Activated T-helper 1 cell treated with anti-CD3 and anti-CD28 coated beads, Interleukin-12 subunit alpha, Interleukin-12 subunit beta, Interleukin-2, Interleukin-4 antibody, amounts not matched to agents 30 ng/mL and 10 ng/mL and 1 ng/mL, durations not matched to agents 14 hours and 24 hours and 36 hours (primary cell): ENCODE measurements at regions of chr1 and their contacts with region 1.

Region 1: GRCh38 chr1:171485375-171486047 is at the start of gene PRRC2C:
- DNase-seq: peak; percentile 91
- H3K4me3 Mint-ChIP-seq: peak within 1 kb of the TSS; percentile 98
- H3K27ac Mint-ChIP-seq: peak within 1 kb of the TSS; percentile 97
- H3K4me1 Mint-ChIP-seq: peaks cover 51% of the 10 kb centered on the region
- H3K27me3 Mint-ChIP-seq: peaks cover 1% of the 10 kb centered on the region
- total RNA-seq, gene PRRC2C: 291 and 295 TPM in 2 replicates

Region 2: DNA sequence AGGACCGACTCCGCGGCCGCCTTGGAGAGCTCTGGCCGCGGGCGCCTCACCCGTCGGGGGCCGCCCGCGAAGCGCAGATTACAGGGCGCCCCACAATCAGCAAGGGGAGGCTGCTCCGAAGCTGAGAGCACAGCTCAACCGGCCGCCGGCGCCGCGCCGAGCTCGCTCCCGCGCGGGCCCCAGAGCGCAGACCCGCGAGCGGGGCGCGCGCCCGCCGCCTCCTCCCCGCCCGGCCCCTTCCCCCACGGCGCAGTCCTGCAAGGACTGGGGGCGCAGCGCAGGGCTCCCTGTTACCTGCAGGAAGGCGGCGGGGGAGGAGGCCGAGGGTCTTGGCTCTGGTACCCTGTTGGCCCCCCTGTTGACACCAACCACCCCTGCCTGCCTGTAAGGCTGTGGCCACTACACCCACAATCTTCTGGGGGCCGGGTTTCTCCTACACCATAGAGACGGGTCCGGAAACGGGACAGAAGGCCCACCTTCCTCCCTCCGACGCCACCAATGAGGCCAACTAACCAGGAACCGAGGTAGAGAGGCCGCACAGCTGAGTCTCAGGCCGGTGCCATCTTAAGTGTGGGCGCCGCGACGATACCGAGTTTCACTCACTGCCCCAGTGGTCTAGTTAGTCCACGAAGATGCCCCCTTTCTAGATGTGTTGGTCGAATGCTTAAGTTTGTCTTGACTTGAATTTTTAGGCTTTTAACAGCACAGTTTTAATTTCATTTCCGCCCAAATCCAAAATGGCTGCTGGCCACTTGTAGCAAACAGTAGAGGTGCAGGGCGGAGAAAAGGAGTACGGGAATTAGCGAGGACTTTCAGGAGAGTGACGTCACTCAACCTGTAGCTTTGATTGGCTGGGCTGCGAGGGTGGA is 1591.8 kb before region 1 on chr1 and contains the start of gene SCYL3:
- intact Hi-C with region 1: loop called (anchors 5 kb)
- DNase-seq: peak; percentile 86
- H3K4me3 Mint-ChIP-seq: peak within 1 kb of the TSS; percentile 86
- H3K27ac Mint-ChIP-seq: peak within 1 kb of the TSS; percentile 100
- H3K4me1 Mint-ChIP-seq: peaks cover 51% of the 10 kb centered on the region
- H3K27me3 Mint-ChIP-seq: peaks cover 12% of the 10 kb centered on the region
- total RNA-seq, gene SCYL3: 11.8 and 12.3 TPM in 2 replicates

Region 3: GRCh38 chr1:170531758-170532657 is 953.5 kb before region 1 on chr1 and contains the start of gene GORAB:
- intact Hi-C with region 1: loop called (anchors 2 kb)
- DNase-seq: peak; percentile 82
- H3K4me3 Mint-ChIP-seq: no peak within 1 kb of the TSS
- H3K27ac Mint-ChIP-seq: no peak within 1 kb of the TSS
- H3K4me1 Mint-ChIP-seq: peaks cover 8% of the 10 kb centered on the region
- H3K27me3 Mint-ChIP-seq: peaks cover 4% of the 10 kb centered on the region
- total RNA-seq, gene GORAB: 11.8 and 12.2 TPM in 2 replicates

Region 4: GRCh38 chr1:171501305-171502024 is 16.0 kb after region 1 on chr1:
- intact Hi-C with region 1: loop called (anchors 1 kb)
- DNase-seq: no peak
- H3K4me3 Mint-ChIP-seq: peak overlapping the region; percentile 2
- H3K27ac Mint-ChIP-seq: peak overlapping the region; percentile 29
- H3K4me1 Mint-ChIP-seq: peaks cover 79% of the 10 kb centered on the region
- H3K27me3 Mint-ChIP-seq: no peaks in the 10 kb centered on the region

Region 5: GRCh38 chr1:171583581-171584201 is 98.2 kb after region 1 on chr1:
- intact Hi-C with region 1: loop called (anchors 2 kb)
- DNase-seq: no peak
- H3K4me3 Mint-ChIP-seq: no peak overlapping the region
- H3K27ac Mint-ChIP-seq: peak overlapping the region; percentile 3
- H3K4me1 Mint-ChIP-seq: peaks cover 38% of the 10 kb centered on the region
- H3K27me3 Mint-ChIP-seq: no peaks in the 10 kb centered on the region

Region 6: DNA sequence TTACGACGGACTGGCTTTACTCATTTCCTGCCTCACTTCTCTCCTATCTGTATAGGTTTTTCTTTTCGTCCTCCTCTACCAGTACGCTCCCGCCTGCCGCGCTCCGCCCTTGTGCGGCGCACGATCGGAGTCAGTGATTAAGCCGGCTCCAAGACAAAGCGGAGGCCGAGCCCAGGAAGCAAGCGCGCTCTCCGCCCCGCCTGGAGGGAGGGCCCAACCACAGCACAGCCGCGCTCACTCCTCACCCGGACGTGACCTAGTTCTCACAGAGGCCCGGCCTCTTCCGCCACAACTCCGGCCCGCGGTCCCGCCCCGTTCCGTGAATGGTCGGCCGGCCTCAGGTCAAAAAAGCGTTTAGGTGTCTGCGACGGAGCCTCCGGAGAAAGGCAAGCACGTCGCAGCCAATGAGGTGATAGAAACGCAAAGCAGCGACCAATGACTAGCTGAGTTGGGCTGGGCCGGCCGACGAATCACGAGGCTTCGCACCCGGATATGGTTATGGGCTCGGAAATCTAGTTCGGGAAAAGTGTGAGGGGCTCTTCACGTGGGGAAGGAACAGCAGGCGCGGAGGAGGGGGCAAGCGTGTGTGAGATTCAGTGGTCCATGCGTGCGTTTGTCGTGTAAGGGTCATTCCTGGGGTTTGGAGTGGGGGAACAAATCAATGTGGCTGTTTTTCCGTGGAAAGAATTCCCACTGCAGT is 295.8 kb after region 1 on chr1 and contains the start of gene METTL13:
- intact Hi-C with region 1: loop called (anchors 1 kb)
- DNase-seq: peak; percentile 99
- H3K4me3 Mint-ChIP-seq: peak within 1 kb of the TSS; percentile 93
- H3K27ac Mint-ChIP-seq: peak within 1 kb of the TSS; percentile 88
- H3K4me1 Mint-ChIP-seq: peaks cover 57% of the 10 kb centered on the region
- H3K27me3 Mint-ChIP-seq: no peaks in the 10 kb centered on the region
- total RNA-seq, gene METTL13: 55.6 and 56.5 TPM in 2 replicates

Region 7: DNA sequence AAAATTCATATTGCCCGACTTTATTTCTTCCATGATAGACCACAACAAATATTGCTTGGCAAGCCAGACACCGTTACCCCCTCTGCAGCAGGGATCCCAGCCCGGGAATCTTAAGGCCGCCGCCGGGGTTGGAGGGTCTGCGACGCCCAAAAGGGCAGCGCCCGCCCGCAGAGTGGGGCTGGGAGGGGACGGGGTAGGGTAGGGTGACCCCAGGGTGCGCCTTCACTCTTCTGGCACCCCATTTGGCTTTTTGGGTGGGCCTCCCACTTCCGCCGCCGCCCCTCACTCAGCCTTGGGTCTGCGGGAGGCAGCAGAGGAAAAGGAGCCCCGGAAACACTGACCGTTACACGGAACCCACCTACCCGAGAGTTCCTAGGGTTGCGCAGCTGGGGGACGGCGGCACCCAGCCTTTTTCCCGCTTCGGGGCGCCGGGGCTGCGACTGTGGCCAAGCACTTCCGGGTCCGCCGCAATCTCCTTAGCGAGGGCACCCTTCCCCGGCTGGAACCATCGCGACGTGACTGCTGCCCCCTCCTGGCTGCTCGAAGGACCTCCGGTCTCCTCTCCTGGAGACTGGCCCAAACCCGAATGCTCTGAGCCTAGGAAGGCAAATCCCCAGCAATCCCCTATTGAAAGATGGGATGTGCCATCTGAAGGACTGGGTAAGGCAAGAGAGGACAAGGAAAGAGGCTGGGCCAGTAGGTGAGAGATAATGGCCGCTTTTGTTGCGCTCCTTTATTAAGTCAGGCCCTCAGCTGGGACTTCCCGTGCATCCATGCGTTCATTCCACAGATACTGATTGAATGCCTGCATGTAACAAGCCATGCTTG is 958.3 kb after region 1 on chr1 and contains the start of gene PIGC:
- intact Hi-C with region 1: loop called (anchors 10 kb)
- DNase-seq: peak; percentile 85
- H3K4me3 Mint-ChIP-seq: peak within 1 kb of the TSS; percentile 94
- H3K27ac Mint-ChIP-seq: peak within 1 kb of the TSS; percentile 86
- H3K4me1 Mint-ChIP-seq: peaks cover 33% of the 10 kb centered on the region
- H3K27me3 Mint-ChIP-seq: no peaks in the 10 kb centered on the region
- total RNA-seq, gene PIGC: 22.6 and 23.3 TPM in 2 replicates